MCF 10A (cell line): ENCODE measurements at regions of chr9 and their contacts with region 1.

Region 1: GRCh38 chr9:137672907-137673791 is 54.3 kb downstream of the EHMT1 start:
- DNase-seq: peak; percentile 68
- H3K4me3 Mint-ChIP-seq: no peak overlapping the region
- H3K27ac Mint-ChIP-seq: no peak overlapping the region
- H3K4me1 Mint-ChIP-seq: peaks cover 19% of the 10 kb centered on the region
- H3K27me3 Mint-ChIP-seq: no peaks in the 10 kb centered on the region
- CTCF ChIP-seq: peak; percentile 79

Region 2: DNA sequence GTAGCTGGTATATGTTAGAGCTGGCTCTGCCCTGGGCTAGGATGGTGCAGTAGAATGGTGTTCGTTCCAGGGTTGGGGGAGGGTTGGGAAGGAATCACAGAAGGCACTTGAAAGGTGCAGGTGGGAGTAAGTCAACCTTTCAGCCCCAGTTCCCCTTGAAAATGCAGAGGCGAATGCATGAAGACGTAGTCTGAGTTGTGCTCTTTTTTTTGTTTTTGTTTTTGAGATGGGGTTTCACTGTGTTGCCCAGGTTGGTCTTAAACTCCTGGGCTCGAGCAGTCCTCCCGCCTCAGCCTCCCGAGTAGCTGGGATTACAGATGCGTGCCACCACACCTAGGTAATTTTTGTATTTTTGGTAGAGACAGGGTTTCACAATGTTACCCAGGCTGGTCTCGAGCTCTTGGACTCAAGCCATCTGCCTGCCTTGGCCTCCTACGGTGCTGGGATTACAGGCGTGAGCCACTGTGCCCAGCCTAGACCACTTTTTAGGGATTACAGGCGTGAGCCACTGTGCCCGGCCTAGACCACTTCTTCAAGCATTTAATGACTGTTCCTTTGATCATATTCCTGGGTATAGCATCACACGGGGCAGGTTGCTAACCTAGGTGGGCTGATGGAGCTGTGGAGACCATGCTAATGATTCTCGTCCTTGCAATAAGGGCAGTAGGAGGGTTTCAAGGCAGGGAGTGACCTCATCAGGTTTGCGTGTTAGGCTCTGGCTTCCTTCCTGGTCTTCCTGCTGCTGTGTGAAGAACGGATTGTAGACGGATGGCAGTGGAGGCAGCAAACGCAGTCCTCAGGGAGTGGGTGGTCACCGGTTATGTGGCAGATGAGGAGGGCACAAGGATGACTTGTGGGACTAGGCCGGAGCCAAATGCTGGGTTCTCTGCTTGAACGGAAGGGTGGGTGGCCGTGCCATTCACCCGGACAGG is 40.7 kb before region 1 on chr9:
- CTCF ChIA-PET with region 1: no interaction called
- POLR2A ChIA-PET with region 1: no interaction called
- intact Hi-C with region 1: no loop called
- DNase-seq: no peak
- H3K4me3 Mint-ChIP-seq: no peak overlapping the region
- H3K27ac Mint-ChIP-seq: peak overlapping the region; percentile 7
- H3K4me1 Mint-ChIP-seq: peaks cover 26% of the 10 kb centered on the region
- H3K27me3 Mint-ChIP-seq: no peaks in the 10 kb centered on the region
- CTCF ChIP-seq: no peak

Region 3: DNA sequence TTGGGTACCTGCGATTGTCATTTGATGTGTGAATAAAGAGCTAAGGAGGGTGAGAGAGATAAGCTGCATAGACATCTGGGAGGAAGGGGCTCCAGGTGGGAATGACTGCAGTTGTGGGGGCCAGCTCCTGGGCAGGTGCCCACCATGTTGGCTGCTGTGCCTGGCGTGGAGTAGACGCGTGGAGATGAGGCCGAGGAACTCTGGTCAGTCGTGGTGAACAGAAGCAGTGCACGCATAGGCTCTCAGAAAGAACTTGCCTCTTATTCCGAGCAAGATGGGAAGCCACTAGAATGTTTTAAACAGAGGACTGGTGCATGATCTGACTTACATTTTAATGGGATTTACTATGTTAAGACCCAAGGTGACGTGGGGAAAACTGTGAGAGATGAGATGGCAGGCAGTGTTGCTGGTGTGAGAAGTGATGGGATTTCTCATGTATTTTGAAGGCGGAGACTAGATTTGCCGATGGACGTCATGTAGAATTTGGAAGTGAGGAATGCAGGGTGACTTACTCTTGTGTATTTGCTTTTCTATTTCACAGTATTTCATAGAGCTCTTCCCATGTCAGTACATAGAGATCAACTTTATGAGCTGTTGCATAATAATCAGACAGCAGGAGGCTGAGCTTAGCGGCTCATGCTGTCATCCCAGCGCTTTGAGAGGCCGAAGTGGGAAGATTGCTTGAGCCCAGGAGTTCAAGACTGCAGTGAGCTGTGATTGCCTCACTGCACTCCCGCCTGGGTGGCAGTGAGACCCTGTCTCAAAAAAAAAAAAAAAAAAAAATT is 16.8 kb after region 1 on chr9:
- CTCF ChIA-PET with region 1: interaction called, 13 read pairs
- POLR2A ChIA-PET with region 1: no interaction called
- intact Hi-C with region 1: no loop called
- DNase-seq: peak; percentile 41
- H3K4me3 Mint-ChIP-seq: no peak overlapping the region
- H3K27ac Mint-ChIP-seq: no peak overlapping the region
- H3K4me1 Mint-ChIP-seq: peaks cover 31% of the 10 kb centered on the region
- H3K27me3 Mint-ChIP-seq: no peaks in the 10 kb centered on the region
- CTCF ChIP-seq: no peak

Region 4: GRCh38 chr9:137772281-137772873 is 99.2 kb after region 1 on chr9:
- CTCF ChIA-PET with region 1: interaction called, 6 read pairs
- POLR2A ChIA-PET with region 1: interaction called, 3 read pairs
- intact Hi-C with region 1: loop called (anchors 5 kb)
- DNase-seq: no peak
- H3K4me3 Mint-ChIP-seq: no peak overlapping the region
- H3K27ac Mint-ChIP-seq: no peak overlapping the region
- H3K4me1 Mint-ChIP-seq: no peaks in the 10 kb centered on the region
- H3K27me3 Mint-ChIP-seq: no peaks in the 10 kb centered on the region
- CTCF ChIP-seq: no peak